Naive thymus-derived CD4-positive, alpha-beta T cell (primary cell): ENCODE measurements at regions of chr12 and their contacts with region 1.

Region 1: GRCh38 chr12:9331218-9331626 is 123.0 kb upstream of the PZP start:
- DNase-seq: peak; percentile 21 to 77 (median 55)
- ATAC-seq: peak; percentile 87
- H3K4me3 ChIP-seq: no peak overlapping the region
- H3K4me3 Mint-ChIP-seq: peak overlapping the region in 2 of 10 donors; percentile 6 to 33
- H3K27ac ChIP-seq: no peak overlapping the region
- H3K27ac Mint-ChIP-seq: peak overlapping the region in 4 of 9 donors; percentile 50 to 66 (median 62)
- H3K4me1 ChIP-seq: peaks cover 0 to 3% of the 10 kb centered on the region in 2 donors
- H3K4me1 Mint-ChIP-seq: peaks cover 18 to 31% (median 23%) of the 10 kb centered on the region in 7 donors
- H3K27me3 ChIP-seq: no peaks in the 10 kb centered on the region
- H3K27me3 Mint-ChIP-seq: peaks cover 0 to 2% (median 0%) of the 10 kb centered on the region in 5 donors

Region 2: GRCh38 chr12:9364224-9365176 is 33.3 kb after region 1 on chr12:
- CTCF ChIA-PET with region 1: interaction called, 3 read pairs
- POLR2A ChIA-PET with region 1: no interaction called
- intact Hi-C with region 1: loop called in 1 of 2 experiments (anchors 2 kb)
- DNase-seq: peak in 1 of 9 donors; percentile 58
- ATAC-seq: peak; percentile 54
- H3K4me3 ChIP-seq: no peak overlapping the region
- H3K4me3 Mint-ChIP-seq: peak overlapping the region in 5 of 10 donors; percentile 1 to 66 (median 9)
- H3K27ac ChIP-seq: no peak overlapping the region
- H3K27ac Mint-ChIP-seq: peak overlapping the region in 1 of 9 donors; percentile 64
- H3K4me1 ChIP-seq: peaks cover 0 to 8% of the 10 kb centered on the region in 2 donors
- H3K4me1 Mint-ChIP-seq: peaks cover 18 to 36% (median 22%) of the 10 kb centered on the region in 7 donors
- H3K27me3 ChIP-seq: no peaks in the 10 kb centered on the region
- H3K27me3 Mint-ChIP-seq: peaks cover 0 to 18% (median 0%) of the 10 kb centered on the region in 5 donors

Region 3: GRCh38 chr12:9404469-9405260 is 73.4 kb after region 1 on chr12:
- CTCF ChIA-PET with region 1: no interaction called
- POLR2A ChIA-PET with region 1: no interaction called
- intact Hi-C with region 1: no loop called
- DNase-seq: no peak
- ATAC-seq: no peak
- H3K4me3 ChIP-seq: no peak overlapping the region
- H3K4me3 Mint-ChIP-seq: no peak overlapping the region
- H3K27ac ChIP-seq: no peak overlapping the region
- H3K27ac Mint-ChIP-seq: peak overlapping the region in 1 of 9 donors; percentile 38
- H3K4me1 ChIP-seq: no peaks in the 10 kb centered on the region
- H3K4me1 Mint-ChIP-seq: no peaks in the 10 kb centered on the region
- H3K27me3 ChIP-seq: no peaks in the 10 kb centered on the region
- H3K27me3 Mint-ChIP-seq: no peaks in the 10 kb centered on the region